Activated T-helper 1 cell treated with anti-CD3 and anti-CD28 coated beads, Interleukin-12 subunit alpha, Interleukin-12 subunit beta, Interleukin-2, Interleukin-4 antibody, amounts not matched to agents 30 ng/mL and 10 ng/mL and 1 ng/mL, durations not matched to agents 14 hours and 24 hours and 36 hours (primary cell): ENCODE measurements at regions of chr3 and their contacts with region 1.

Region 1: GRCh38 chr3:10344147-10344943 is 23.4 kb upstream of the SEC13 start:
- DNase-seq: peak; percentile 25
- H3K4me3 Mint-ChIP-seq: no peak overlapping the region
- H3K27ac Mint-ChIP-seq: no peak overlapping the region
- H3K4me1 Mint-ChIP-seq: no peaks in the 10 kb centered on the region
- H3K27me3 Mint-ChIP-seq: no peaks in the 10 kb centered on the region

Region 2: GRCh38 chr3:10299679-10300078 is 44.7 kb before region 1 on chr3:
- intact Hi-C with region 1: no loop called
- DNase-seq: no peak
- H3K4me3 Mint-ChIP-seq: no peak overlapping the region
- H3K27ac Mint-ChIP-seq: peak overlapping the region; percentile 16
- H3K4me1 Mint-ChIP-seq: peaks cover 12% of the 10 kb centered on the region
- H3K27me3 Mint-ChIP-seq: no peaks in the 10 kb centered on the region

Region 3: GRCh38 chr3:10505050-10505790 is 160.9 kb after region 1 on chr3 and contains the start of gene ATP2B2:
- intact Hi-C with region 1: loop called (anchors 10 kb)
- DNase-seq: no peak
- H3K4me3 Mint-ChIP-seq: no peak within 1 kb of the TSS
- H3K27ac Mint-ChIP-seq: no peak within 1 kb of the TSS
- H3K4me1 Mint-ChIP-seq: no peaks in the 10 kb centered on the region
- H3K27me3 Mint-ChIP-seq: peaks cover 18% of the 10 kb centered on the region
- total RNA-seq, gene ATP2B2: not detected in 2 replicates

Region 4: GRCh38 chr3:10738688-10739372 is 394.5 kb after region 1 on chr3:
- intact Hi-C with region 1: loop called (anchors 1 kb)
- DNase-seq: peak; percentile 61
- H3K4me3 Mint-ChIP-seq: no peak overlapping the region
- H3K27ac Mint-ChIP-seq: no peak overlapping the region
- H3K4me1 Mint-ChIP-seq: peaks cover 11% of the 10 kb centered on the region
- H3K27me3 Mint-ChIP-seq: peaks cover 17% of the 10 kb centered on the region